AG04449 (cell line): ENCODE measurements at regions of chr13 and their contacts with region 1.

Region 1: DNA sequence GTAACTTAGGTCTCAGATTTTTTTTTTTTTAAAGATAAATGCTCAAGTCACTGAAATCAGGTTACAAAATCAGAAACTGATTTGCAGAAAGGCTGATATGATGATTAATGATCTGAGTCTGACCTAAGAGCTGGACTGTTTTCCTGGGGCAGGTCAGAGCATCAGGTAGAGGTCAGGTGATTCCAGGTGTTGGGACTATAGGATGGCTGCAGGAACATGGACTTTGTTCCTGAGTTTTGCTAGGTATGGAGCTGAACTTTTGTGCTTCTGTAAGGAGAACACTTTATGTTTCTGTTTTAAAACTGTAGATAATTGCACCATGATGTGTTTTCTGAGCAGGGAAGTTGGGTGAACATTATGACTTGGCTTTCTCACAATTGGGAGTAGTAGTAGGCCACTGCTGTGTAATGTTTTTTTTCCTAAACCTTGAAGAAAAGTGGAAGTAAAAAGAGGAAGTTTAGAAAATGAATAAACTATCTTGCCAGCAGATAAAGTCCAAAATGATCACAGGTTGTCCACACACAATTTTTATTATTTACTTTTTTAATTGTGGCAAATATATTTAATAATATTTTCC is 297.2 kb downstream of the DCT start:
- DNase-seq: no peak
- H3K4me3 ChIP-seq: no peak overlapping the region
- CTCF ChIP-seq: no peak

Region 2: GRCh38 chr13:94192431-94192975 is 10.2 kb after region 1 on chr13:
- CTCF ChIA-PET with region 1: interaction called, 11 read pairs
- POLR2A ChIA-PET with region 1: no interaction called
- DNase-seq: no peak
- H3K4me3 ChIP-seq: no peak overlapping the region
- CTCF ChIP-seq: peak; percentile 57